CD14-positive monocyte (primary cell): ENCODE measurements at regions of chr17 and their contacts with region 1.

Region 1: GRCh38 chr17:63697341-63698286 is 2.3 kb downstream of the LIMD2 start:
- DNase-seq: peak; percentile 81 to 83 (median 81)
- H3K4me3 ChIP-seq: peak overlapping the region; percentile 74 to 100 (median 92)
- H3K4me3 Mint-ChIP-seq: peak overlapping the region; percentile 95 to 97
- H3K27ac ChIP-seq: peak overlapping the region; percentile 70 to 85
- H3K27ac Mint-ChIP-seq: peak overlapping the region; percentile 82 to 95 (median 90)
- H3K4me1 ChIP-seq: peaks cover 56 to 73% of the 10 kb centered on the region in 2 donors
- H3K4me1 Mint-ChIP-seq: peaks cover 60% of the 10 kb centered on the region
- H3K27me3 ChIP-seq: no peaks in the 10 kb centered on the region
- H3K27me3 Mint-ChIP-seq: peaks cover 0 to 3% (median 0%) of the 10 kb centered on the region in 3 donors
- CTCF ChIP-seq: peak; percentile 87

Region 2: GRCh38 chr17:63549946-63550807 is 147.4 kb before region 1 on chr17 and contains the start of gene DCAF7:
- intact Hi-C with region 1: loop called in 1 of 2 experiments (anchors 10 kb)
- DNase-seq: peak; percentile 99 to 100 (median 100)
- H3K4me3 ChIP-seq: peak within 1 kb of the TSS; percentile 74 to 99 (median 81)
- H3K4me3 Mint-ChIP-seq: peak within 1 kb of the TSS; percentile 96 to 97
- H3K27ac ChIP-seq: peak within 1 kb of the TSS; percentile 88 to 96
- H3K27ac Mint-ChIP-seq: peak within 1 kb of the TSS; percentile 96 to 98 (median 97)
- H3K4me1 ChIP-seq: peaks cover 35 to 48% of the 10 kb centered on the region in 2 donors
- H3K4me1 Mint-ChIP-seq: peaks cover 48% of the 10 kb centered on the region
- H3K27me3 ChIP-seq: no peaks in the 10 kb centered on the region
- H3K27me3 Mint-ChIP-seq: peaks cover 0 to 3% (median 3%) of the 10 kb centered on the region in 3 donors
- CTCF ChIP-seq: no peak
- polyA plus RNA-seq, gene DCAF7: 41.9 to 89.4 (median 58.1) TPM

Region 3: DNA sequence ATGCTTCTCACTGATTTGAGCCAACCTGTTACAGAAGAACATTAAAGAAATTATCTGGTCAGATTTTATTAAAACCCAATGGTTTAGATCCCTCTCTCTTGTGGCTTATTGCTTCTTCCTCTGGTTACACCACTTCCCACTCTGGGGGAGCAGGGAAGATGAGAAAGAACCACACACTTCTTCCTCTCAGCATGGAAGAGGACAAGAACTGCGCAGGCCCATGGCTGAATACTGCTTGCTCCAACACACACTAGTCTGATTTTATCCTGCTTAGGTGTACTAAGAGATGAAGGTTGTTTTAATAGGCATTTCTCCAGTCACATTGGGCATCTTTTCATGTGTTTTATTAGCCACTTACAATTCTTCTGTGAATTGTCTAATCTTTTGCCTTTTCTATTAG is 47.8 kb before region 1 on chr17:
- intact Hi-C with region 1: loop called in 1 of 2 experiments (anchors 5 kb)
- DNase-seq: peak; percentile 37 to 63 (median 56)
- H3K4me3 ChIP-seq: peak overlapping the region in 1 of 3 experiments; percentile 49
- H3K4me3 Mint-ChIP-seq: peak overlapping the region in 1 of 2 donors; percentile 20
- H3K27ac ChIP-seq: peak overlapping the region in 1 of 2 donors; percentile 50
- H3K27ac Mint-ChIP-seq: peak overlapping the region; percentile 7 to 88 (median 75)
- H3K4me1 ChIP-seq: peaks cover 83 to 93% of the 10 kb centered on the region in 2 donors
- H3K4me1 Mint-ChIP-seq: peaks cover 91% of the 10 kb centered on the region
- H3K27me3 ChIP-seq: no peaks in the 10 kb centered on the region
- H3K27me3 Mint-ChIP-seq: peaks cover 0 to 2% (median 1%) of the 10 kb centered on the region in 3 donors
- CTCF ChIP-seq: no peak

Region 4: GRCh38 chr17:63747420-63747819 is 49.8 kb after region 1 on chr17:
- intact Hi-C with region 1: loop called (anchors 5 kb)
- DNase-seq: no peak
- H3K4me3 ChIP-seq: no peak overlapping the region
- H3K4me3 Mint-ChIP-seq: no peak overlapping the region
- H3K27ac ChIP-seq: peak overlapping the region in 1 of 2 donors; percentile 9
- H3K27ac Mint-ChIP-seq: peak overlapping the region in 2 of 7 donors; percentile 0 to 10
- H3K4me1 ChIP-seq: peaks cover 22 to 31% of the 10 kb centered on the region in 2 donors
- H3K4me1 Mint-ChIP-seq: peaks cover 28% of the 10 kb centered on the region
- H3K27me3 ChIP-seq: no peaks in the 10 kb centered on the region
- H3K27me3 Mint-ChIP-seq: no peaks in the 10 kb centered on the region
- CTCF ChIP-seq: no peak

Region 5: GRCh38 chr17:63827002-63827771 is 129.6 kb after region 1 on chr17 and contains the starts of genes FTSJ3 and PSMC5:
- intact Hi-C with region 1: loop called in 1 of 2 experiments (anchors 5 kb)
- DNase-seq: peak; percentile 91 to 95 (median 93)
- H3K4me3 ChIP-seq: peak within 1 kb of the TSS; percentile 80 to 94 (median 84)
- H3K4me3 Mint-ChIP-seq: peak within 1 kb of the TSS; percentile 99 to 100
- H3K27ac ChIP-seq: peak within 1 kb of the TSS; percentile 76 to 95
- H3K27ac Mint-ChIP-seq: peak within 1 kb of the TSS; percentile 97 to 100 (median 100)
- H3K4me1 ChIP-seq: peaks cover 18 to 22% of the 10 kb centered on the region in 2 donors
- H3K4me1 Mint-ChIP-seq: peaks cover 34% of the 10 kb centered on the region
- H3K27me3 ChIP-seq: no peaks in the 10 kb centered on the region
- H3K27me3 Mint-ChIP-seq: peaks cover 0 to 2% (median 0%) of the 10 kb centered on the region in 3 donors
- CTCF ChIP-seq: peak; percentile 27
- polyA plus RNA-seq, gene FTSJ3: 9.2 to 23.7 (median 15.0) TPM
- polyA plus RNA-seq, gene PSMC5: 82.8 to 97.2 (median 88.3) TPM